ENCODE measurements at regions of chr2 and their contacts with region 1.

Region 1: GRCh38 chr2:232315049-232315922 is 63.3 kb upstream of the ALPP start:
- H3K4me3 ChIP-seq: no peak overlapping the region
- H3K27ac ChIP-seq: no peak overlapping the region
- H3K4me1 ChIP-seq: no peaks in the 10 kb centered on the region
- CTCF ChIP-seq: no peak

Region 2: GRCh38 chr2:232327105-232328041 is 12.1 kb after region 1 on chr2:
- CTCF ChIA-PET with region 1: interaction called, 11 read pairs
- POLR2A ChIA-PET with region 1: no interaction called
- H3K4me3 ChIP-seq: no peak overlapping the region
- H3K27ac ChIP-seq: no peak overlapping the region
- H3K4me1 ChIP-seq: no peaks in the 10 kb centered on the region
- CTCF ChIP-seq: peak; percentile 54; the same call in 1 of the 2 replicates